ENCODE measurements at regions of chr19 and their contacts with region 1.

Region 1: DNA sequence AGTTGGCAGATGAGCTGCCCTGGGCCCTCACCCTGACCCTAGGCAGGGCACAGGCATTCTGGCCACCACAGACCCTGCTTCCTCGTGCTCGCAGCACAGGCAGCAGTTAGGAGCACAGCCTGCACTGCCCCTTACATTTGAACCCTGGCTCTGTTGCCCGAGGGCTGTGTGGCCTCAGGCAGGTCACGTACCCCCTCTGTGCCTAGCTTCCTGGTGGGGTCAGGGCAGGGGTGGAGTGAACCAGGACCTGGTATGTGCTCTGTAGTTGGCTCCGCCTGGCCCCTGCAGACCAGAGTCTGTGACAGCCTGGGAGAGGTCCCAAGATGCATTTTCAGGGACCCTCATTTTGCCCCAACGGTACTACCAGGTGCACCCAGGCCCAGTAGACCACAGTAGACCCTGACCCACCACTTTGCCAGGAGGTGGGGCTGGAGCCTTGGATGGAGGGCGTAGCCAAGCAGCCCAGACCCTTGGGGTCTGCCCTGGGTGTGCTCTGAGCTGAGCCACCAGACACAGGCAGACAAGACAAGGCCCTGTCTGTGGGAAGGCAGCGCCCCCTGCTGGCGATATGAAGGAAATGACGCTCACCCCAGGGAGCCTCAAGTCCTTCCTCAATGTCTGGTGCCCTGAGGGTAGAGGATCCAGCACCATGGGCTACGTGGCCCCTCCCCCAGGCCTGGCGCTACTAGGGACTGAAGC is 9.1 kb downstream of the LYL1 start:
- DNase-seq: peak; percentile 63
- H3K4me3 Mint-ChIP-seq: no peak overlapping the region
- H3K27ac Mint-ChIP-seq: no peak overlapping the region
- H3K4me1 Mint-ChIP-seq: peaks cover 12% of the 10 kb centered on the region
- H3K27me3 Mint-ChIP-seq: peaks cover 19% of the 10 kb centered on the region

Region 2: DNA sequence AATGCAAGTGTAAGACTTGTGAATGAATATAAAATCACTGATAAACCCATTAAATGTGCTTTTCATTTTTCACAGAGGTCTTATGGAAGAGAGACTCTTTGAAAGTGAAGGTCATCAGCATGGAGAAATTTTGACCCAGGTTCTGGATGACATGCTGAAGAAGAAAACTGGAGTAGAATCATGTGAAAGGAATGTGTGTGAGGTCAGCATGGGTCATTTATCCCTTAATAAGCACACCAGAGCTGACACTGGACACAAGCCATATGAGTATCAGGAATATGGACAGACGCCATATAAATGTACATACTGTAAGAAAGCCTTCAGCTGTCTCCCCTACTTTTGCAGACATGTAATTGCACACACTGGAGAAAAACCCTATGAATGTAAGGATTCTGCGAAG is 982.4 kb before region 1 on chr19:
- intact Hi-C with region 1: no loop called
- DNase-seq: no peak
- H3K4me3 Mint-ChIP-seq: no peak overlapping the region
- H3K27ac Mint-ChIP-seq: no peak overlapping the region
- H3K4me1 Mint-ChIP-seq: no peaks in the 10 kb centered on the region
- H3K27me3 Mint-ChIP-seq: no peaks in the 10 kb centered on the region

Region 3: DNA sequence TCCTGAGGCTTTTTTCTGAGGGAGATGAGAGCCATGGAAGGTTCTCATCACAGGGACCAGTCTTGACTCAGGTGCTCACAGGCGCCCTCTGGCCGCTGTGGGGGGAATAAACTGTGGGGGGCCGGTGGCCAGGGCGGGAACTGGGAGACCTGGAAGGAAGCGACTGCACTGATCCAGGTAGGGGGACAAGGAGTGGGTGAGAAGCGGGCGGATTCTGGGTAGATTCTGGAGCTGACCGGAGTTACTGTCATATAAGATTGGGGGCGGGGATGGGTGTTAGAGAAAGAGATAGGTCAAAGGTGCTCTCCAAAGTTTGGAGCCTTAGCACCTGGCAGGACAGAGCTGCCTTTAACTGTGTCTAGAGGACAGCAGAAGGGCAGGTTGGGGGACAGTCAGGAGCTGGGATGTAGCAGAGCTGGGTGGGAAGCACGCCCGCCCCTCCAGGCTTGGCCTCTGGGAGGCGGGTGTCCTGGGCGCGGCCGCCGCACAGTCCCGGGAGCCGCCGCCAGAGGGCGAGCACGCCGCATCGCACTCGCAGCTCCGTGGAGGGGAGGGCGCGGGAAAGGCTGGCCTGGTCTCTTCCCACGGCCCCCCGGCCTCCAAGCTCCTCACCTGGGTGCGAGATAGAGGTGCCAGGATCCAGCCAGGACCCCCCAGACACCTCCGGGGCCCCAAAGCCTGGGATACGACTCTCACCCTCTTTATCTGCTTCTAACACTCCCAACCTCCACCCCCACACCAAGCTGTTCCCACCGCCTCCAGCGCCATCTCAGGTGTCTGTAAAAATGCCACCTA is 128.3 kb before region 1 on chr19:
- intact Hi-C with region 1: loop called (anchors 1 kb)
- DNase-seq: peak; percentile 75
- H3K4me3 Mint-ChIP-seq: peak overlapping the region; percentile 84
- H3K27ac Mint-ChIP-seq: peak overlapping the region; percentile 84
- H3K4me1 Mint-ChIP-seq: peaks cover 16% of the 10 kb centered on the region
- H3K27me3 Mint-ChIP-seq: peaks cover 5% of the 10 kb centered on the region